Panc1 (cell line): ENCODE measurements at regions of chr1 and their contacts with region 1.

Region 1: GRCh38 chr1:100960098-100960497 is 64.2 kb downstream of the SLC30A7 start:
- DNase-seq: no peak
- ATAC-seq: no peak
- H3K4me3 ChIP-seq: no peak overlapping the region
- H3K27ac ChIP-seq: no peak overlapping the region
- H3K4me1 ChIP-seq: no peaks in the 10 kb centered on the region
- H3K27me3 ChIP-seq: no peaks in the 10 kb centered on the region
- CTCF ChIP-seq: no peak

Region 2: DNA sequence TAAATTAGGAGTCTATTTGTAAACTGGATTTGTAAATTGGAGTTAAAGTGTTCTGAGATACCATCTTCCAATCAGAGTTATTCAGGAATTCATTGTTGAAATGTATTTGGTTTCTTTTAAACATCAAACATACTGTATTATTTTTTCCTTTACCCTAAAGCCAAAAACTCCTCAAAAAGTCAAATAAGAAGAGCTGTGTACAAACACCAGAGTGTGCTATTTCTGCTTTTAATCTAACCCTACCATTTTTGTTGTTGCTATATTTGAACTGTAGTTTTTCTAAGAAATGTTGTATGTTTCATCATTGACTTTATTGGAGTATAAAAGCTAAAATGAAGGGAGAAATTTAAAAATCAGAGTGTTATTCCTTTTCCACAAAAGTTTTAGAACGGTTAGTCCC is 28.4 kb before region 1 on chr1:
- CTCF ChIA-PET with region 1: no interaction called
- POLR2A ChIA-PET with region 1: no interaction called
- in situ Hi-C with region 1: no loop called
- intact Hi-C with region 1: no loop called
- DNase-seq: no peak
- ATAC-seq: no peak
- H3K4me3 ChIP-seq: no peak overlapping the region
- H3K27ac ChIP-seq: no peak overlapping the region
- H3K4me1 ChIP-seq: no peaks in the 10 kb centered on the region
- H3K27me3 ChIP-seq: no peaks in the 10 kb centered on the region
- CTCF ChIP-seq: no peak

Region 3: DNA sequence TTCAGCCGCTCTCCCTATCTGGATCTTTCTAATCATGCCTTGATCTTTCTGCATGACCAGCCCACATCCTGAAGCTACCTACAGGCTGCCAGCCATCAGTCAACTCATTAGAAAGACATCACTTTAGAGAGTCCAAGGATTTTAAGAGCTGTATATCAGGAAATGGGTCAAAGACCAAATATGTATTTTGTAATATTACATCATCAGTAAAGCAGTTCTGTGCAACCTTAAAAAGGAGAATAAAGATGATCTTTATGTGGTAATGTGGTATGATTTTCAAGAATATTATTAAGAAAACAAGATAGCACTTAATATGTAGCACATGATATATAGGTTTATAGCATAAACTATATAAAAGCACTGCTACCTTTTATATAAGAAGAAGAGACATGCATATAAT is 16.6 kb before region 1 on chr1:
- CTCF ChIA-PET with region 1: no interaction called
- POLR2A ChIA-PET with region 1: interaction called, 17 read pairs
- in situ Hi-C with region 1: no loop called
- intact Hi-C with region 1: no loop called
- DNase-seq: no peak
- ATAC-seq: no peak
- H3K4me3 ChIP-seq: no peak overlapping the region
- H3K27ac ChIP-seq: no peak overlapping the region
- H3K4me1 ChIP-seq: no peaks in the 10 kb centered on the region
- H3K27me3 ChIP-seq: no peaks in the 10 kb centered on the region
- CTCF ChIP-seq: no peak